BJ (cell line): ENCODE measurements at regions of chr3 and their contacts with region 1.

Region 1: DNA sequence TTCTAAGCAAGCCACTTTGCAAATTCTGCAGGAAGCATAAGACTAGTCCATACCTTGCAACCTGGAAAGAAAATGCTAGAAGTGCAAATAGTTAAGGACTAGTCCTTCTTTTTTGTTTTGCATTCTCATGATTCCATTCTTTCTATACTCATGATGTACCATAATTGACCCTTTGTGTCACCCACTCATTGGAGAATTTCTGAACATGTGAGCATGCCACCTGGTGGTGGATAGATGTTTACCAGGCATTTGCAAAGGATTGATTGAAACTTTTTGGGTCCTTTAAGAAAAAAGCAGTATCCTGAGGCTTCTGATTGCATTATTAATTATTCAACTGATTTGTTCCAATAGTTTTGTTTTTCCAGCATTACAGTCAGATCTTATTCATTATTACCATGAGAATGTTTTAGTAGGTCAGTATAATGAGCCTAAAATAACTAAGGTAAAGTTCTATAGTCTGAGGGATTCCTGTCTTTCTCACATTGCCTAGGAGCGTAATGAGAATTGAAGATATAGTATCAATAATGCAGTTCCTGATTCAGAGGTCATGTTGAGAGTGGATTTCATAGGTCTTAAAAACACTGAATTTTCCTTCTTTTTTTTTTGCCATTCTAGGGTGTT is 20.2 kb upstream of the DIPK2A start:
- DNase-seq: no peak
- H3K4me3 ChIP-seq: no peak overlapping the region
- H3K27me3 ChIP-seq: peaks cover 2% of the 10 kb centered on the region
- CTCF ChIP-seq: peak; percentile 81

Region 2: DNA sequence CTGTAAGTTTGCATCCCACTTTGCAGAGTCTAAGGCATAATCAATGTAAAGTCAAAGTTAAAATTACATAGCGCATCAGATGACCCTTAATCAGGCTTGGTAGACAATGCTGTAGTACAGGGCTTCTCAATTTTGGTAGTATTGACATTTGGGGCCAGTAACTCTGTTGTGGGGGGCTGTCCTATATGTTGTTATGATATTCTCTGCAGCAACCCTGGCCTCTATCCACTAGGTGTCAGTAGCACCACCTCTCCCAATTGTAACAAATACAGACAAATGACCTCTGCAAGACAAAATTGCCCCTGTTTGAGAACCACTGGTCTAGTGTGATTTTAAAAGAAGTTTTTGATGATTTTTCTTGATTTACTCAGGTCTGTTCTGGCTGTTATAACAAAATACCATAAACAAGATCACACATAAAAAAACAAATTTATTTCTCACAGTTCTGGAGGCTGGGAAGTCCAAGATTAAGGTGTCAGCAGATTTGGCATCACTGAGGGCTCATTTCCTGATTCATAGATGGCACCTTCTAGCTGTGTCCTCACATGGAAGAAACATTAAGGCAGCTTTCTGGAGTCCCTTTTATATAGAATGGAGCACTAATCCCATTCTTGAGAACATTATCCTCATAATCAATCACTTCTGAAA is 65.6 kb before region 1 on chr3:
- CTCF ChIA-PET with region 1: interaction called, 19 read pairs
- POLR2A ChIA-PET with region 1: no interaction called
- DNase-seq: no peak
- H3K4me3 ChIP-seq: no peak overlapping the region
- H3K27me3 ChIP-seq: peaks cover 3% of the 10 kb centered on the region; the same call in 1 of the 2 replicates
- CTCF ChIP-seq: peak; percentile 87

Region 3: DNA sequence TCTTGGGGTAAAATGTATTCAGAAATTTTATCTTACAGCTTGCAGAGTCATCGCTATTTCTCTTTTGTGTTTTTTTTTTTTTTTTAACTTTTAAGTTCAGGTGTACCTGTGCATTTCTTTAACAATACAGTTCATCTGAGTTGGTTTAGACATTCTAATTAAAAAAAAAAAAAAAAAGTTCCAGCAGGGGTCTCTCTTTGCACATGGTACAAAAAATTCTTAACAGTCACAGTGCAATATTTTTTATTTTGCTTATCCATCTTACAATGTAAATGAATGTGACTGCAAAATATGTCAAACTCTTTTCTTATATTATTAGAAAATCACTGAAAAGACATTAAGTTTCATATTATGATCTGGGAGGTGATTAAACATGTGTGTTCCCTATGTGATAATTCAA is 55.7 kb before region 1 on chr3:
- CTCF ChIA-PET with region 1: interaction called, 12 read pairs
- POLR2A ChIA-PET with region 1: no interaction called
- DNase-seq: no peak
- H3K4me3 ChIP-seq: no peak overlapping the region
- H3K27me3 ChIP-seq: peaks cover 3% of the 10 kb centered on the region; the same call in 1 of the 2 replicates
- CTCF ChIP-seq: peak; percentile 21; the same call in 1 of the 2 replicates

Region 4: GRCh38 chr3:143963946-143964345 is 12.5 kb after region 1 on chr3:
- CTCF ChIA-PET with region 1: no interaction called
- POLR2A ChIA-PET with region 1: no interaction called
- DNase-seq: no peak
- H3K4me3 ChIP-seq: no peak overlapping the region
- H3K27me3 ChIP-seq: no peaks in the 10 kb centered on the region
- CTCF ChIP-seq: no peak